ENCODE measurements at regions of chr6 and their contacts with region 1.

Region 1: GRCh38 chr6:33744001-33744848 is 2.5 kb downstream of the IP6K3 start:
- DNase-seq: peak; percentile 57 to 68 (median 66)
- H3K4me3 ChIP-seq: no peak overlapping the region
- H3K4me3 Mint-ChIP-seq: no peak overlapping the region
- H3K27ac ChIP-seq: no peak overlapping the region
- H3K27ac Mint-ChIP-seq: no peak overlapping the region
- H3K4me1 ChIP-seq: no peaks in the 10 kb centered on the region
- H3K4me1 Mint-ChIP-seq: peaks cover 0 to 4% (median 3%) of the 10 kb centered on the region in 4 donors
- H3K27me3 ChIP-seq: peaks cover 7% of the 10 kb centered on the region
- H3K27me3 Mint-ChIP-seq: peaks cover 0 to 7% of the 10 kb centered on the region in 2 donors

Region 2: GRCh38 chr6:33755070-33755869 is 11.0 kb after region 1 on chr6:
- CTCF ChIA-PET with region 1: interaction called, 12 read pairs
- POLR2A ChIA-PET with region 1: no interaction called
- intact Hi-C with region 1: no loop called
- DNase-seq: no peak
- H3K4me3 ChIP-seq: no peak overlapping the region
- H3K4me3 Mint-ChIP-seq: no peak overlapping the region
- H3K27ac ChIP-seq: no peak overlapping the region
- H3K27ac Mint-ChIP-seq: no peak overlapping the region
- H3K4me1 ChIP-seq: no peaks in the 10 kb centered on the region
- H3K4me1 Mint-ChIP-seq: peaks cover 0 to 1% (median 0%) of the 10 kb centered on the region in 4 donors
- H3K27me3 ChIP-seq: no peaks in the 10 kb centered on the region
- H3K27me3 Mint-ChIP-seq: peaks cover 1 to 3% of the 10 kb centered on the region in 2 donors

Measured in CD4-positive, alpha-beta memory T cell (primary cell).